Left cardiac atrium (tissue), 4 donors: ENCODE measurements at regions of chr10 and their contacts with region 1.

Region 1: DNA sequence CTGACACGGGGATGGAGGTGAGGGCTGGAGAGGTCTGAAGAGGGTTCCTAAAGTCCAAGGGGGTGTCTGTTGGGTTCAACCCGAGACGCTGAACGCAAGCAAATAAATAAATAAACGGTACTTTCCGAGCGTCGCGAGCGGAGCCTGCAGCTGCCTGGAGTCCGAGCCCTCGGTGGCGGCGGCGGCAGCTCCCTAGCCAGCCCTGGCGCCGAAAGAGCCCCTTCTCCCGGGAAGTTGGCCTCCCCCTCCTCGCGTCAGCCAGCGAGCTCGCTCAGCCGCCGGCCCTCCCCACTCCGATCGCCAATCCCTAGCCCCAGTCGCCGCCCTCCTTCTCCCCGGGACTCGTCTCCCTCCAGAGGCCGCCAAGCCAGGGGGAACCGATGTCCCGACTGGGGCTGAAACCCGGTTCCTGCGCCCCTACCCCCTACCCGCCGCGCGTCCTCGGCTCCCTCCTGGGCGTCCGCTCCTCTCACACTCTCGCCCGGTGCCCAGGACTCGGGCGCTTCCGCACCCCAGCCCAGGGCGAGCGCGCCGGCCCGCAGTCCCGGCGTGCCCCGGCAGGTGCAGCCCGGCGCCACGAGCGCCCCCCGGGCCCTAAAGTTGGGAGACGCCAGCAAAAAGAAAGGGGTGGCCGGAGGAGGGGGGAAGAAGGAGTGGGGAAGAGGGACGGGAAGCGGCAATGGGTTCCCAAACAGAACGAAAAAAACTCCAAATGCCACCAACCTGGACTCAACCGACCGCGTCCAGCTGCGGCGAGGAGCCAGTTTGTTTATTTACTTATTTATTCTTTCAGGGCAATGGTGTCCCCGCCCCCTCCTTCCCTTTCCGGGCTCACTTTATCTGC is at the start of gene GFRA1:
- DNase-seq: no peak
- ATAC-seq: peak; percentile 25 to 58
- total RNA-seq, gene GFRA1: 4.9 to 12.1 TPM

Region 2: GRCh38 chr10:115829521-115830205 is 443.0 kb before region 1 on chr10:
- intact Hi-C with region 1: loop called in 1 of 2 experiments (anchors 10 kb)
- DNase-seq: no peak
- ATAC-seq: peak; percentile 30 to 35